ENCODE measurements at regions of chr1 and their contacts with region 1.

Region 1: GRCh38 chr1:97505816-97506215 is 415.0 kb downstream of the DPYD start:
- DNase-seq: no peak
- H3K4me3 ChIP-seq: no peak overlapping the region
- H3K27ac ChIP-seq: no peak overlapping the region
- H3K27me3 ChIP-seq: no peaks in the 10 kb centered on the region
- CTCF ChIP-seq: no peak

Region 2: DNA sequence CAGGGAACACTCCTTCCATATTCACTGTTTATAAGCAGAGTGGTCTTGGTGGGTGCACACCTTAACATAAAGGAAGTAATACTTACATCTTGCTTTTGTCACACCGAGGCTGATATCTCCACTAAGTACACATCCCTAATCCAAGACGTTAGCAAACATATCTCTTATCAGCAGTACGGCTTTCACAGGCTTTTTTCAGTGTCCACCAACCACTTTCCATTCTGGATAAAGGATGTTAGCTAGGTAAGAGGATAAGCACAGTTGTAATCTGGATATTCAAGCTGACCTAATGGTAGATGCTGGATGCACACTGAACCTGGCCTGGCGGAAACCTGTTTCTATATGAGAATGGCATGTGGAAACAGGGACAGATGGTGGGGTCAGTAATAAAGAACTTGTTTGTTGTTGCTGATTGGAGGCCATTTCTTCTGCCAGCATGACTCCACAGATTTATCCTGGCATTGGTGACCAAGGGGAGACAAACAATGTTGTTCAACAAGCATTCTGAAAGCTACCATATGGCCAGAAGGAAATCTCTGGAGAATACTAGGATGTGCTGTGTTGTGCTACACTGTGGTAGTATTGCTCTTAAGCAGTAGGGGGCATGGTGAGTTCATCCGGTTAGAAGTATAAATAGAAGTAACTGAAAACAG is 367.8 kb before region 1 on chr1:
- intact Hi-C with region 1: loop called in 1 of 2 experiments (anchors 10 kb)
- DNase-seq: peak in 3 of 10 donors; percentile 9 to 33 (median 25)
- H3K4me3 ChIP-seq: peak overlapping the region in 26 of 59 donors; percentile 10 to 46 (median 30)
- H3K27ac ChIP-seq: peak overlapping the region in 55 of 59 donors; percentile 7 to 86 (median 60)
- H3K27me3 ChIP-seq: no peaks in the 10 kb centered on the region
- CTCF ChIP-seq: peak; percentile 21 to 82 (median 71)

Region 3: GRCh38 chr1:97377432-97378034 is 128.3 kb before region 1 on chr1:
- intact Hi-C with region 1: no loop called
- DNase-seq: no peak
- H3K4me3 ChIP-seq: no peak overlapping the region
- H3K27ac ChIP-seq: no peak overlapping the region
- H3K27me3 ChIP-seq: no peaks in the 10 kb centered on the region
- CTCF ChIP-seq: no peak

Region 4: GRCh38 chr1:97412166-97412565 is 93.7 kb before region 1 on chr1:
- intact Hi-C with region 1: loop called in 1 of 2 experiments (anchors 10 kb)
- DNase-seq: no peak
- H3K4me3 ChIP-seq: peak overlapping the region in 12 of 59 donors; percentile 1 to 41 (median 22)
- H3K27ac ChIP-seq: peak overlapping the region in 25 of 59 donors; percentile 6 to 80 (median 29)
- H3K27me3 ChIP-seq: no peaks in the 10 kb centered on the region
- CTCF ChIP-seq: no peak

Region 5: GRCh38 chr1:97451046-97451826 is 54.6 kb before region 1 on chr1:
- intact Hi-C with region 1: no loop called
- DNase-seq: no peak
- H3K4me3 ChIP-seq: no peak overlapping the region
- H3K27ac ChIP-seq: peak overlapping the region in 1 of 59 donors; percentile 33
- H3K27me3 ChIP-seq: no peaks in the 10 kb centered on the region
- CTCF ChIP-seq: no peak

Region 6: GRCh38 chr1:97461782-97462181 is 44.0 kb before region 1 on chr1:
- intact Hi-C with region 1: no loop called
- DNase-seq: no peak
- H3K4me3 ChIP-seq: no peak overlapping the region
- H3K27ac ChIP-seq: peak overlapping the region in 31 of 59 donors; percentile 1 to 71 (median 36)
- H3K27me3 ChIP-seq: no peaks in the 10 kb centered on the region
- CTCF ChIP-seq: no peak

Region 7: DNA sequence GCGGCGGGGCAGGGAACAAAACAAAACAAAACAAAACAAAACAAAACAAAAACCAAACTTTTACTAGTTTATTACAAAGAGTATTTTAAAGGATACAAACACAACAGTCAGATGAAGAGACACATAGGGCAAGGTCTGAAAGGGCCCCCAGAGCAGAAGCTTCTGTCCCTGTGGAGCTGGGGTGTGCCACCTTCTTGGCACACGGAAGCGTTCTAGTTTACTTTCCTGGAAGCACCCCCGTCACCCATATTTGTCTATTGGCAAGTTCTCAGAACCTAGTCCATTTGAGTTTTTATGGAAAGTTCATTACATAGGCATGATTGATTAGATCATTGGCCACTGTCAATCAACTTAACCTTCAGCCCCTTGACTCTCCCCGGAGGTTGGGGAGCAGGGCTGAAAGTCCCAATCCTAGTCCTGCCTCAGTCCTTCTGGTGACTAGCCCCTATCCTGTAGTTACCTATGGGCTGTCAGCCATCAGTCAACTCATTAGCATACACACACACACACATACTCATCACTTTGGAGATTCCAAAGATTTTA is 34.6 kb after region 1 on chr1:
- intact Hi-C with region 1: no loop called
- DNase-seq: no peak
- H3K4me3 ChIP-seq: no peak overlapping the region
- H3K27ac ChIP-seq: no peak overlapping the region
- H3K27me3 ChIP-seq: no peaks in the 10 kb centered on the region
- CTCF ChIP-seq: no peak

Measured in dorsolateral prefrontal cortex (tissue), 120 donors.